Heart left ventricle (tissue), 16 donors: ENCODE measurements at regions of chr3 and their contacts with region 1.

Region 1: DNA sequence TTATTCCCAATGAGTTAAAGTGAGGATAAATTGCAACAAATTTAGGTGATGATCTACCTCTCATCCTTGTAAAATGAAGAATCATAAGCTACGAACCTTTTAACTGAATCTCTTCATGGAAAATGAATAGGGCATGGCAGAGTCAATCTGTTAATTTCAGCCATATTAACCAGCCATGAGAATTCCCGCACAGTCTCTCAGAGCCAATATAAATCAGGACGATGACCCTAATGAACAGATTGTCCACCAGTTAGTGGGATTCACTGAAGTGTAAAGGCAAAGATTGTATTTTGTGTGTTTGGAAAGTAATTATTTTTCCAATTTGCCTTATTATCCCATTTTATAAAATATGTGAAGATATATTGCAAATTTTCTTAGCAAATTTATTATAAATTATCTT is 183.8 kb downstream of the CADM2 start:
- DNase-seq: no peak
- ATAC-seq: no peak
- H3K4me3 ChIP-seq: no peak overlapping the region
- H3K27ac ChIP-seq: no peak overlapping the region
- H3K4me1 ChIP-seq: no peaks in the 10 kb centered on the region
- H3K27me3 ChIP-seq: no peaks in the 10 kb centered on the region
- CTCF ChIP-seq: no peak
- POLR2A ChIP-seq: no peak

Region 2: GRCh38 chr3:83821506-83821905 is 1321.1 kb before region 1 on chr3:
- intact Hi-C with region 1: no loop called
- DNase-seq: no peak
- ATAC-seq: no peak
- H3K4me3 ChIP-seq: no peak overlapping the region
- H3K27ac ChIP-seq: no peak overlapping the region
- H3K4me1 ChIP-seq: no peaks in the 10 kb centered on the region
- H3K27me3 ChIP-seq: no peaks in the 10 kb centered on the region
- CTCF ChIP-seq: no peak
- POLR2A ChIP-seq: no peak

Region 3: GRCh38 chr3:84522893-84523292 is 619.7 kb before region 1 on chr3:
- intact Hi-C with region 1: no loop called
- DNase-seq: no peak
- ATAC-seq: no peak
- H3K4me3 ChIP-seq: no peak overlapping the region
- H3K27ac ChIP-seq: no peak overlapping the region
- H3K4me1 ChIP-seq: no peaks in the 10 kb centered on the region
- H3K27me3 ChIP-seq: no peaks in the 10 kb centered on the region
- CTCF ChIP-seq: no peak
- POLR2A ChIP-seq: no peak

Region 4: GRCh38 chr3:85193565-85193964 is 50.9 kb after region 1 on chr3:
- intact Hi-C with region 1: loop called in 1 of 10 experiments (anchors 10 kb)
- DNase-seq: no peak
- ATAC-seq: no peak
- H3K4me3 ChIP-seq: no peak overlapping the region
- H3K27ac ChIP-seq: no peak overlapping the region
- H3K4me1 ChIP-seq: no peaks in the 10 kb centered on the region
- H3K27me3 ChIP-seq: no peaks in the 10 kb centered on the region
- CTCF ChIP-seq: no peak
- POLR2A ChIP-seq: no peak